HAP-1 (cell line): ENCODE measurements at regions of chr17 and their contacts with region 1.

Region 1: DNA sequence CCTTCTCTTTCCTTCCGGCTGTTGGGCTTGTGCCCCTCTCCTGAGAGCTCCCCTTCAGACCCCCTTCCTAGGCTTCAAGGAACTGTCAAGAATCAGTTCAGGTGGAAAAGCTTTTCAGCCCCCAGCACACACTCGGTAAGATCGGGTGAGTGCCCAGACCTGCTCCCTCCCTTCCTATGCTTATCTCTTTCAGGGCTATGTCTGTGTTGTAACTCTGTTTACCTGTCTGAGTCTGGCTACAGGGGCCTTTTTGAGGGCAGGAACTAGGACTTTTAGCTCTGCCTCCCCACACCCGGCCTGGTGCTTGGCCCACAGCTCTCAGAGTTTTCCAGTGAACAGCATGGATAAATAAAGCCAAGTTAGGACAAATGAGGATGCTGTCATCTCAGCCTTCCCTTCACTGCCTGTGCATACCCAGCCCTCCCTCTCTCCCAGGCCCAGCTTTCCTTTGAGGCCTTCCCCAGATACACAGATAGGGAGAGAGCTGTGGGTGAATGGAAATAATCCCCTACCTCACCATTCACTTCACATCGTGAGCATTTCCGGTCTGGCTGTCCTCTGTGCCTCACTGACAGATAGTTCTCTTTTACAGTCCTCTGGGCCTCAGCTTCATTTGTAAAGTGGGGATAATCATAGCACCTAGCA is 5.7 kb upstream of the MRPS23 start:
- DNase-seq: no peak
- H3K4me3 ChIP-seq: no peak overlapping the region
- H3K4me1 ChIP-seq: peaks cover 6% of the 10 kb centered on the region; the same call in 1 of the 2 replicates
- H3K27me3 ChIP-seq: no peaks in the 10 kb centered on the region

Region 2: GRCh38 chr17:57995076-57995956 is 139.8 kb after region 1 on chr17:
- in situ Hi-C with region 1: loop called (anchors 5 kb)
- DNase-seq: peak; percentile 70 to 76
- H3K4me3 ChIP-seq: no peak overlapping the region
- H3K4me1 ChIP-seq: peaks cover 15% of the 10 kb centered on the region
- H3K27me3 ChIP-seq: no peaks in the 10 kb centered on the region

Region 3: DNA sequence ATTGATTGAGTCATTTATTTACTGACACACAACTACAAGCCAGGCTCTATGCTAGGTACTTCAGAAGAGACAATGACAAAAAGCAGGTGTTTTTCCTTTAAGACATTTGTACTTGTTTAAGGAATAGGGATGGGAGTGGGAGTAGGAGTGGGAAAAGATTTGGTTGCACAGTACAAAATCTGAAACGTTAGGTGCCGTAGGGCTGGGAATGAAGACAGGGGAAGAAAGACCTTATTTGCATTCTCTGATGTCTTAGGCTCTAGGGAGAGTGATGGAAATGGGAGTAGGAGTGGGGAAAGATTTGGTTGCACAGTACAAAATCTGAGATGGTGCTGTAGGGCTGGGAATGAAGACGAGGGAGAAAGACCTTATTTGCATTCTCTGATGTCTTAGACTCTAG is 264.0 kb after region 1 on chr17:
- in situ Hi-C with region 1: loop called (anchors 5 kb)
- DNase-seq: no peak
- H3K4me3 ChIP-seq: no peak overlapping the region
- H3K4me1 ChIP-seq: no peaks in the 10 kb centered on the region
- H3K27me3 ChIP-seq: peaks cover 2% of the 10 kb centered on the region; the same call in 1 of the 2 replicates